ENCODE measurements at regions of chr17 and their contacts with region 1.

Region 1: DNA sequence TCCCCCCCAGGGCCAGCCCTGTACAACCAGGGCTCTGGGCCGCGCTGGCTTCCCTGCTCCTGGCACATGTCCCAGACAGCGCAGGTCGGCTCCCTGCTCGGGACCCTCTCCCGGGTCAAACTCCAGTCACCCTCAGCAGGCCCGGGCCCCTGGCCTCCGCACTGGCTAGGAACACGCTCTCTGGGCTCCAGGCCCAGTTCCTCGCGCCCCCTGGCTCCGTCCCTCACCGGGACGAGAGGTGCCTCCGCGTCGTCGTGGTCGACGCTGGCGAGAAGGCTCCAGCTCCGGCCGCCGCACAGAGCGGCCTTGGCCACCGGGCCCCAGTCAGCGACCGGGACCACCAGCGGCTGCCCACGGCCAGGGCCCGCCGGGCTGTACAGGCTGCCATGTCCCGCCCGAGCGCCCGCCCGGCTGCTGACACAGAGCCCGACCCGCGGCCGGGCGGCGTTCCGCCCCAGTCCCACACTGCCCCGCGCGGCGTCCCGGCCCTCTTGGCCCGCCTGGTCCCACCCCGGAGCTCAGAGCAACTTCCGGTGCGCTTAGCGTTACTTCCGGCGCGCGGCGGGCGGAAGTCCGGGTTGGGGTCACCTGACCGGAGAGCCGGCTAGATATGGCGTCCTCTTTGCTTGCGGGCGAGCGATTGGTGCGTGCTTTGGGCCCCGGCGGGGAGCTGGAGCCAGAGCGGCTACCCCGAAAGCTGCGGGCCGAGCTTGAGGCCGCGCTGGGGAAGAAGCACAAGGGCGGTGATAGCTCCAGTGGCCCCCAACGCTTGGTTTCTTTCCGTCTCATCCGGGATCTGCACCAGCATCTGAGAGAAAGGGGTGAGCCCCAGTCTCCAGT is at the start of gene POLDIP2:
- DNase-seq: peak; percentile 92

Region 2: GRCh38 chr17:28252436-28252835 is 104.8 kb before region 1 on chr17:
- CTCF ChIA-PET with region 1: no interaction called
- POLR2A ChIA-PET with region 1: no interaction called
- DNase-seq: no peak

Region 3: DNA sequence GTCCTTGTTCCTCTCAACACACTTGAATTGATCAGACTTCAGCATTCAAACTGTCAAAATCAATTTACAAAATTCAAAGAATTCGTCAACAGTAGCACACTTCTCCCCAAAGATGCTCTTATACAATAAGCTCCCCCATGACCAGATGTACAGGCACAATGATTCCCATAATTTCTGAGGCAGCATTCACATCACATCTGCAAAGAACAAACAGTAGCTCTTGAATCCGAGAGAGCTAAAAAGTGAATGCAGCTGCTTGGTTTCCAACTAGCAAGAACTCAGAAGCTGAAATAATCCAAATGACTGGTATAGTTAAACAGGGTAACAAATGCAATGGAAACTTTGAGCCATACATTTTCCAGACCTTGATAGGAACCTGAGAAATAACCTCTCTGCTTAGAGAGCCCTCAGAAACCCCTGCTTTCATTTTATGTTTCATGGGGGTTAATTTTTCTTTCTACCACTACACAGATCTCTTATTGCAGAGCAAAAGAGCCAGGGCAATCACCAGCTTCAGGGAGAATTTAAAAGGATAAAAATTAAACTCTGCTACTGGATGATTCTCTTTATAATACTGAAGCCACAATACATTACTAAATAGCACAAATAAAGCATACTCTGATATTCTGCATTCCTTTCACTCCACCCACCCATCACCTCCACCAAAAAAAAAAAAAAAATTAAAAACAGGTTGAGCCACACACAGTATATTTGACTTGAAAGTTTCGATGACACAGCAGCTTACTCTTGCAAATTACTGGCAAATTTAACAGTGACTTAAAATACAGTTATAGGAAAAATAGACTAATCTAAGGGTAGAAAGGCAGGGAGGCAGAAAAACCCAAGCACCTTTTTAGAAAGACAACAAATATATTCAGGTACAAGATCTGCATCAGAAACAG is 61.4 kb before region 1 on chr17:
- CTCF ChIA-PET with region 1: no interaction called
- POLR2A ChIA-PET with region 1: no interaction called
- DNase-seq: no peak

Region 4: DNA sequence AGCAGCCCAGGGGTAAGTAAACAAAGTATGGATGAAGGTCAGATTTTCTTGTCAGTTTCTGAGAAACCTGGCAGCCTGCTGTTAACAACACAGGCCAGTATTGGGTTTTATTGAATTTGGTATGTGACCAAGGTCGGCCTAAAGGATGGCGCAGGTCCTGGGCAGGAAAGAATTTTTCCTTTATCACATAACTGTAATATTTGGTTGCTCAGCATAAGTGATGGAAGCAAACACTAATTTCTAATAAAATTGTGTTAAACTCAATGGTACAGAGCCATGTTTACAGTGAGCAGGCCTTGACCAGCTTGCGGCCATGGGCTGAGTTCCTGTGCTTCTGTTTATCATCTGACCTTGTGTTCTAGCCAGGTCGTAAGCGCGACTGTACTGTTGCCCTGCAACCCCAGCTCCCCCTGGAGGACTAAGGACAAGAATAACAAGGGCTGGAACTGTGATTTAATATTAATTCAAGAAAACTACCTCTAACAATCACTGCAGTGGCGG is 10.5 kb before region 1 on chr17:
- CTCF ChIA-PET with region 1: no interaction called
- POLR2A ChIA-PET with region 1: interaction called, 36 read pairs
- DNase-seq: no peak

Region 5: GRCh38 chr17:28371245-28372202 is 14.2 kb after region 1 on chr17 and contains the start of gene SARM1:
- CTCF ChIA-PET with region 1: interaction called, 6 read pairs
- POLR2A ChIA-PET with region 1: interaction called, 64 read pairs
- DNase-seq: peak; percentile 83

Region 6: DNA sequence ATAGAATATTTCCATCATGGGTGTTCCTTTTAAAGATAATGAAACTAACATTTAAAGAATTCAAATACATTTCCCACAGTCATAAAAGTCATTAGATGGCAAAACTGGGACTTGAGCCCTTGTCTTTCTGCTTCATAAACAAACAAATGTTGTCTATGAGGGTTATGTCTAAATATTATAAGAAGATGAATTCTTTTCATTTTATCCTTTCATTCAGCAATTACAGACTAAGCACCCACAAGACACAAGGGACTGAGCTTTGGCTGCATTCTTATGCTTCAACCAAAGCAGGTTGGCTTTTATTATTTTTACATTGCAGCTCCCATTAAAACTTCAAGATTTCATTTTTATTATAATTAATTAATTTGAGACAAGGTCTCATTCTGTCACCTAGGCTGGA is 29.1 kb after region 1 on chr17:
- CTCF ChIA-PET with region 1: no interaction called
- POLR2A ChIA-PET with region 1: no interaction called
- DNase-seq: no peak

Region 7: DNA sequence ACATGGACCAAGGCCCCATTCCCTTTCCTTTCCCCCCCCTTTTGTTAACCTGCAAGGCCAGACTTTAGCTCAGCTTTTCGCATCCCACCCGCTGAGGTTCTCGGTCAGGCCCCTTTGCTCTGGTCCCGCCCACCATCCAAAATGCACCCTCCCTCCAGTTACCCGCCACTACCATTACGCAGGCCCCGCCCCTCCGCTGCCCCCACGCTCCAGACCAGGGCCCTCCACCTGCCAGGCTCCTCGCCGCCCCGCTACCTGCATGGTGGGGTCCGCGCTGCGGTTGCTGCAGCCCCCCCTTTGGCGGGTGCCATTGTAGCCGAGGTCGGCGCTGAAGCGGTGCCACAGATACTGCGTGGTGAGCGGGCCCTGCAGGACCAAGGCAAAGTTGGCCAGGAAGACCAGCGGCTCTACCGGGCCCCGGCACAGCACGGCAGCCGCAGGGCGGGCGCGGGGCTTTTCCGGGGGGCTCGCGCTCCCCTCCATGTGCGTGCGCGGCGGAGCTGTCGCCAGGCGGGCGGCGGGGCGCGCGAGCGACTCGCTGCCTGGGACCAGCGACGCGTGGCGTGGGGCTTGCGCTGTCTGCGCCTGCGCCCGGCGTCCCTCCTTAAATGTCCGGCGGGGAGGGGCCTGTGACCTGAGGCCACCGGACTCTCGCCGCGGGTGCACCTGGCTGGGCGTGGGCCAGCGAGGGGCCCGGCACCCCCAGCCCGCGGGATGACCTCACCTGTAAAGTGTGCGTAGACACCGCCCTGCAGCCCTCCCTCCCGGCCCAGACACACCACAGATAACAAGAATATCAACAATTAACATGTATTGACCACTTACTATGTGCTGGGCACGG is 48.6 kb after region 1 on chr17 and contains the start of gene SLC46A1:
- CTCF ChIA-PET with region 1: no interaction called
- POLR2A ChIA-PET with region 1: interaction called, 17 read pairs
- DNase-seq: peak; percentile 70

Region 8: DNA sequence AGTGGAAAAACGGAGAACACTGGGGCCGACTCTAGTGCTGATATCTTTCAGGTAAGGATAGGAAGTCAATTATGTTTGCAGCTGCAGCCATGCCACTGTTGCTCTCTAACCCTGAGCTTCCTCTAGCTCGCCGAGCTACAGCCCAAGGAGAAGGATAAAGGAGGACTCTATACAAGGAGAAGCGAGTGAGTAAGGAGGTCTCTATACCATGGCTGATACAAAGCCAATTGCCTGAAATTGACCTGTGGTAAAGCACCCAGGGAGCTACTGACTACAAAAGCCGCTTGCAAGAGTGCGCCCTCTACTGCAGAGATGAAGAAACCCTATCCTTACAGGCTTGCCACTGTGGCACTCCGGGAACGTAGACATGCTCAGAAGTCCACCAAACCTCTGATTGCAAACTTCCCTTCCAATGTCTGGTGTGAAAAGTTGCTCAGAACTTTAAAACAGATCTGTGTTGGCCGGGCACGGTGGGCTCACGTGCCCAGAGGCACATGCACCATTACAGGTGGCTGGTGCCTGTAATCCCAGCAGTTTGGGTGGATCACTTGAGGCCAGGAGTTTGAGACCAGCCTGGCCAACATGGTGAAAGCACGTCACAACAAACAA is 59.5 kb after region 1 on chr17:
- CTCF ChIA-PET with region 1: no interaction called
- POLR2A ChIA-PET with region 1: interaction called, 12 read pairs
- DNase-seq: peak; percentile 65